ENCODE measurements at regions of chr6 and their contacts with region 1.

Region 1: GRCh38 chr6:32984605-32985389 is 16.4 kb downstream of the BRD2 start:
- DNase-seq: peak; percentile 86
- H3K4me3 ChIP-seq: no peak overlapping the region
- H3K27ac ChIP-seq: peak overlapping the region; percentile 29; the same call in 1 of the 2 replicates
- H3K4me1 ChIP-seq: no peaks in the 10 kb centered on the region
- H3K27me3 ChIP-seq: no peaks in the 10 kb centered on the region

Region 2: DNA sequence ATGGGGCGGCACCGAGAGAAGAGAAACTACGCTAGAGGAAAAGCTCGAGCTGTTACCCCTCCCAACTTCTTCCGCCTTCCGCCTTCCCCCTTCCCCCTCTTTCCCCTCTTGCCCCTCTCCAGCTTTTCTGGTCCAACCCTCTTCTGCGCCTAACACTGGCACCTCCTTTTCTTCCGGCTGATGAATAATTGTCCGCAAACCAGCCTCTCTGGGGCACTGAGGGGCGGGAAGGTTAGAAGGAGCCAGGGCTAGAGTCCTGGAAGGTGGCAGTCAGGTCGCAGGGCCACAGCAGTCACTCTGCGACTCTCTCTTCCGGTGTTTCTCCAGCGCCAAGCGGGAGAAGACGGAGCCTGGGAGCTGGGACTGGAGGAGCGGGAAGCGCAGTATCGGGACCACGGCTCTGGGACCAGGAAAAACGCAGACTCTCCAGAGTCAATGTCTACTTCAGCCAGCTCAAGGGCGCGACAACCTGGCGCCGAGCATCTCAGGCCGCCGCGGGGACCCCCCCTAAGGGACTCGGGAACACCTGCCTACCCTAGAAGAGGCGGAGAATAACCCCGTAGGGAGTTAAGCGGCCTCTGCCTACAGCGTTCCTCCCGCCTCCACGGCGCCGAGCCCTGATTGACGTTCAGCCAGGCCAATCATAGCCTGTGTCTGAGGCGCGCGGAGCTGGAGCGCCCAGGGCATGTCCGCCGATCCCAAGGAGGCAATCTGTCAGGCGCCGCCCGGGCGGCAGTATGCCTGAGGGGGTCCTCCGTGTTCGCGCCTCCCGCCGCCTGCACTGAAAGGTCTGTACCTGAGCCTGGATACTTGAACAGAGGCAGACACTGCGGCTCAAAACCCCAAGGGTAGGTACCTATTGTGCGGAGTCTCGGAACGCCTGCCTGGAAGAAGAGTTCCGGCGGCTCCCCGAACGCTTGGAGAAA is 90.5 kb before region 1 on chr6:
- in situ Hi-C with region 1: loop called (anchors 10 kb)
- DNase-seq: peak; percentile 91
- H3K4me3 ChIP-seq: peak overlapping the region; percentile 96
- H3K27ac ChIP-seq: peak overlapping the region; percentile 52
- H3K4me1 ChIP-seq: peaks cover 7% of the 10 kb centered on the region; the same call in 1 of the 2 replicates
- H3K27me3 ChIP-seq: no peaks in the 10 kb centered on the region